ENCODE measurements at regions of chr13 and their contacts with region 1.

Region 1: GRCh38 chr13:39602614-39603366 is at the start of gene LHFPL6:
- DNase-seq: peak in 1 of 2 donors; percentile 91
- H3K4me3 ChIP-seq: peak within 1 kb of the TSS; percentile 86 to 91
- H3K27ac ChIP-seq: peak within 1 kb of the TSS; percentile 93
- H3K4me1 ChIP-seq: peaks cover 38% of the 10 kb centered on the region
- H3K27me3 ChIP-seq: no peaks in the 10 kb centered on the region
- CTCF ChIP-seq: no peak
- POLR2A ChIP-seq: peak in 1 of 2 donors; percentile 58
- total RNA-seq, gene LHFPL6: 54.8 TPM

Region 2: DNA sequence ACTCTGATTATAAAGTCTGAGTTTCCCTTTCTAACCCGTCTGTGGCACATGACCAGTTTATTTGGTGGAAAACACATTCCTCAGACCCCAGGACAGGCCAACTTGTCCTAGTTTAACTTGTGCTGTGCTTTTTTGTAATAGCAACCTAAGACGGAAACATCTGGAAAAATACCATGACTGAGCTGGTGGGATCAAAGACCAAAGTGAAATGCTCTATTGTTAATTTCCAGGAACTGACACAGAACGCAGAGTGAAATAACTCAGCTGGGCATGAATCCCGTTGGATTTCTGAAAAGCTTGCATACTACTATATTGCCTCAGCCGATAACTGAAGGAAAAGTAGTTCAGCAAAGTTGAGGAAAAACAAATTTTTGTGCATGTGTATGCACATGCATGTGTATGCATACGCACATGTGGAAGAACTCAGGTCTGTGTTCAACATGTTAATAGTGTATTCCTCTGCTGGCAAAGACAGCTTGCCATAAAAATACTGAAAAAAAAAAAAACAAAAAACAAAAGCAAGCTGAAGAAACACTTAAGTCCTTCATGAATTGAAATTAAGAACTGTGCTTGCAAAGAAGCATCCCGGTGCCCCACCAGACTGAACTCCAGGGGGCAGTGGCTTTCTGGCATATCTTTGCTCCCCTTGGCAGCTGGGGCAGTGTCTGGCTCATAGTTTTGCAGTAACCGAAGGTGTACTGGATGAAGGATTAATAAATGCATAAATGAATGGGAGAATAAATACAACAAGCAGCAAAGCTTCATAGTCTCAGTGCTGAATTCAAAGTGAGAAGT is 187.6 kb before region 1 on chr13:
- intact Hi-C with region 1: loop called (anchors 5 kb)
- DNase-seq: no peak
- H3K4me3 ChIP-seq: peak overlapping the region in 1 of 2 donors; percentile 2
- H3K27ac ChIP-seq: peak overlapping the region; percentile 62
- H3K4me1 ChIP-seq: peaks cover 30% of the 10 kb centered on the region
- H3K27me3 ChIP-seq: no peaks in the 10 kb centered on the region
- CTCF ChIP-seq: no peak
- POLR2A ChIP-seq: no peak

Region 3: GRCh38 chr13:39451860-39452301 is 150.9 kb before region 1 on chr13:
- intact Hi-C with region 1: no loop called
- DNase-seq: no peak
- H3K4me3 ChIP-seq: no peak overlapping the region
- H3K27ac ChIP-seq: no peak overlapping the region
- H3K4me1 ChIP-seq: peaks cover 26% of the 10 kb centered on the region
- H3K27me3 ChIP-seq: no peaks in the 10 kb centered on the region
- CTCF ChIP-seq: no peak
- POLR2A ChIP-seq: no peak

Region 4: GRCh38 chr13:39847336-39847735 is 244.5 kb after region 1 on chr13:
- intact Hi-C with region 1: no loop called
- DNase-seq: no peak
- H3K4me3 ChIP-seq: no peak overlapping the region
- H3K27ac ChIP-seq: no peak overlapping the region
- H3K4me1 ChIP-seq: no peaks in the 10 kb centered on the region
- H3K27me3 ChIP-seq: no peaks in the 10 kb centered on the region
- CTCF ChIP-seq: no peak
- POLR2A ChIP-seq: no peak

Measured in vagina (tissue), 2 donors.